AG04449 (cell line): ENCODE measurements at regions of chr5 and their contacts with region 1.

Region 1: GRCh38 chr5:132260714-132261551 is 3.4 kb downstream of the PDLIM4 start:
- DNase-seq: peak; percentile 51
- H3K4me3 ChIP-seq: no peak overlapping the region; the same call in 1 of the 2 replicates
- CTCF ChIP-seq: no peak

Region 2: DNA sequence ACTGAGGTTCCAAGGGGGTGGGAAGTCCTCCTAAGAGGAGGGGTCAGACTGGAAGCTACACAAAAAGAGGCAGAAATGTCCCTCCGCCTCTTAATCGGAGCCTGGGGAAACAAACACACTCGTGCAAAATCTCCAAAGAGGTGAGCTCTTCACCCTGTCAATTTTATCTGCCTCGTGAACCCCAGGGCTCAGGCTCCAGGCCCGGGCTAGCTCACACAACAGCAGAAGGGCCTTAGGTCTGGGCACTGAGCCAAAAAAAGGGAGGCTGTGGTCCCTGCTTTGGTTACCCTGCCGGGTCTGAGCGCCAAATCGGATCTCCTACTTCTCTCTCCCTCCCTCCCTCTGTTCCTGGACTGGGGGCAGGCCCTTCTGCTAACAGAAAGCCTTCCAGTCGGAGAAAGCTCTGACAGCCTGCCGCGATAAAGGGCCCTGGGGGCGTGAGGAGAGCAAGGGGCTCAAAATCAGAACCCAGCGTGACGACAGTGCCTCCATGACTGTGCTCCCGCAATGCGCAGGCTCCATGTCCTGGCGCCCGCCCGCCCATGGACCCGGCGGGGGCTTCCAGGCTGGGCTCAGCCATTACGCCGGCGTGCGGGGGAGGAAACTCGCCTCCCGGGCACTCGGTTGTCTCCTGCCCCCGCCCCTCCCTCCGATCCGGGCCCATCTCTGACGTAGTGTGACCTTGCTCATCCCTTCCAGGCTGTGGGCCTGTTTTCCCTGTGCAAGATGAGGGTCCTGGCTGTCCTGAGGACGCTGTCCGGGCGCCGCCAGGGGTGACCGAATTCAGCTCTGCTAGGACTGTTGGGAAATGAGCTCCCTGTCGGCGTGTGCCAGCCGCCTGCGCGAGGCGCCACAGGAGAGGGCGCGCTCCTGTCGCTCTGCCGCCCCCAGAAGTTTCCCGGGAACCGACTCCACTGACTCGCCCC is 32.4 kb after region 1 on chr5:
- CTCF ChIA-PET with region 1: interaction called, 3 read pairs
- POLR2A ChIA-PET with region 1: interaction called, 10 read pairs
- DNase-seq: peak; percentile 36
- H3K4me3 ChIP-seq: peak overlapping the region; percentile 72
- CTCF ChIP-seq: peak; percentile 22

Region 3: GRCh38 chr5:132426525-132427138 is 165.7 kb after region 1 on chr5:
- CTCF ChIA-PET with region 1: no interaction called
- POLR2A ChIA-PET with region 1: no interaction called
- DNase-seq: peak; percentile 76
- H3K4me3 ChIP-seq: no peak overlapping the region; the same call in 1 of the 2 replicates
- CTCF ChIP-seq: peak; percentile 56